Activated T-helper 1 cell treated with anti-CD3 and anti-CD28 coated beads, Interleukin-12 subunit alpha, Interleukin-12 subunit beta, Interleukin-2, Interleukin-4 antibody, amounts not matched to agents 30 ng/mL and 10 ng/mL and 1 ng/mL, durations not matched to agents 14 hours and 24 hours and 36 hours (primary cell): ENCODE measurements at regions of chr11 and their contacts with region 1.

Region 1: DNA sequence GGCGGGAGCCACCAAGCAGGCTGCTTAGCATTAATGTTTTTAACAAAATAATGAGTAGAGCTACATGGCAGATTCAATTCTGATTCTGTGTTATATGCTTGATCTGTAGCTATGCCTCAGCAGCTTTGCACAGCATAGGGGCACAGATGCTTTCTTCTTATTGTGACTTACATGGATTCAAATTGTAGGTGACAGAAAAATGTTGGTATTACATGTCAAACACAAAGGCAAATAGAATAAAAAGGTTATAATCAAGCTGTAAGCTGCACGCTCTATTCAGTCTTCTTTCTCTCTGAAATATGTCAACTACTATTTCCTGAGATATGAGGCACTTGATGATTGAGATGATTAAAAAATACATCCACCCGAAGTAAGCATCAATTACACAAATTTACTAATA is 1573.8 kb downstream of the FAM181B start:
- DNase-seq: no peak
- H3K4me3 Mint-ChIP-seq: no peak overlapping the region
- H3K27ac Mint-ChIP-seq: no peak overlapping the region
- H3K4me1 Mint-ChIP-seq: no peaks in the 10 kb centered on the region
- H3K27me3 Mint-ChIP-seq: no peaks in the 10 kb centered on the region

Region 2: DNA sequence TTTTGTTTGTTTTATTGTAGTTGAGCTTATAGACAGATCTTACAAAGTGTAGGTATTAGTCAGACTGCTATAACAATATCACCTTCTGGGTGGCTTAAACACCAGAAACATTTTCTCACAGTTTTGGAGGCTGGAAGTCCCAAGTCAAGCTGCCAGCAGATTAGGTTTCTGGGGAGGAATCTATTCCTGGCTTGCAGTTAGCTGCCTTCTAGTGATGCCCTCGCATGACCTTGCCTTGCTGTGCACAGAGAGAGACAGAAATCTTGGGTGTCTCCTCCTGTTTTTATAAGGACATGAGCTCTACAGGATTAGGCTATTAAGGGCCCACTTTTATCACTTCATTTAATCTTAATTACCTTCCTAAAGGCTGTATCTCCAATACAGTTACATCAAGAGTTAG is 61.4 kb before region 1 on chr11:
- intact Hi-C with region 1: loop called (anchors 10 kb)
- DNase-seq: no peak
- H3K4me3 Mint-ChIP-seq: no peak overlapping the region
- H3K27ac Mint-ChIP-seq: no peak overlapping the region
- H3K4me1 Mint-ChIP-seq: no peaks in the 10 kb centered on the region
- H3K27me3 Mint-ChIP-seq: no peaks in the 10 kb centered on the region